ENCODE measurements at regions of chr15 and their contacts with region 1.

Region 1: GRCh38 chr15:62742409-62743171 is 300.0 kb upstream of the TPM1 start:
- DNase-seq: peak; percentile 46
- H3K4me3 Mint-ChIP-seq: no peak overlapping the region
- H3K27ac Mint-ChIP-seq: no peak overlapping the region
- H3K4me1 Mint-ChIP-seq: no peaks in the 10 kb centered on the region
- H3K27me3 Mint-ChIP-seq: peaks cover 1% of the 10 kb centered on the region

Region 2: GRCh38 chr15:62389885-62390790 is 352.5 kb before region 1 on chr15:
- CTCF ChIA-PET with region 1: interaction called, 7 read pairs
- POLR2A ChIA-PET with region 1: no interaction called
- intact Hi-C with region 1: loop called (anchors 2 kb)
- DNase-seq: peak; percentile 73
- H3K4me3 Mint-ChIP-seq: peak within 1 kb of the TSS; percentile 92
- H3K27ac Mint-ChIP-seq: peak within 1 kb of the TSS; percentile 72
- H3K4me1 Mint-ChIP-seq: peaks cover 14% of the 10 kb centered on the region
- H3K27me3 Mint-ChIP-seq: peaks cover 22% of the 10 kb centered on the region

Region 3: DNA sequence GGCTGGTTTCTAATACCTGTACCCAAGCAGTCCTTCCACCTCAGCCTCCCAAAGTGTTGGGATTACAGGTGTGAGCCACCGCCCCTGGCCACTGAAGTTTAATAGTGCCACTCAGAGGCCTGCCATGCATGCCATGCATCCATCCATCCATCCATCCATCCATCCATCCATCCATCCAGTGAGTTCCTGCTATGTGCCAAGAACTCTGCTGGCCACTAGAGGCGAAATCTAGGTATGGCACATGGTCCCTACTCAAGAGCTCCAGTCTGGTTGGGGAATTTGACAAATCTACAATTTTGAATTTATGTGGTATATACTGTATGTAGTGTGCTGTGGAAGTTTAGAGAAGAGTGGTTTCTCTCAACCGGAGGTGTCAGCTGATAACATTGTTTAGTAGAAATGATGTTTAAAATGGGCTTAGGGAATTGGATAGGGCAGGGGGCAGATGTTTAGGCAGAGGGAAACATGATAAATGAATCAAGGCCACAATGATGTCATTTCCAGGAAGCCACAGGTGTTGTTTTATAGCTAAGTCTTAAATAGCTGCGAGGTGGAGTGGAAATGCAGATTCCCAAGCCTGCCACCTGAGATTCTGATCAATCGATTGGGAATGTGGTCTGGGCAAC is 193.1 kb before region 1 on chr15:
- CTCF ChIA-PET with region 1: no interaction called
- POLR2A ChIA-PET with region 1: no interaction called
- intact Hi-C with region 1: no loop called
- DNase-seq: peak; percentile 10
- H3K4me3 Mint-ChIP-seq: no peak overlapping the region
- H3K27ac Mint-ChIP-seq: no peak overlapping the region
- H3K4me1 Mint-ChIP-seq: no peaks in the 10 kb centered on the region
- H3K27me3 Mint-ChIP-seq: peaks cover 11% of the 10 kb centered on the region

Region 4: DNA sequence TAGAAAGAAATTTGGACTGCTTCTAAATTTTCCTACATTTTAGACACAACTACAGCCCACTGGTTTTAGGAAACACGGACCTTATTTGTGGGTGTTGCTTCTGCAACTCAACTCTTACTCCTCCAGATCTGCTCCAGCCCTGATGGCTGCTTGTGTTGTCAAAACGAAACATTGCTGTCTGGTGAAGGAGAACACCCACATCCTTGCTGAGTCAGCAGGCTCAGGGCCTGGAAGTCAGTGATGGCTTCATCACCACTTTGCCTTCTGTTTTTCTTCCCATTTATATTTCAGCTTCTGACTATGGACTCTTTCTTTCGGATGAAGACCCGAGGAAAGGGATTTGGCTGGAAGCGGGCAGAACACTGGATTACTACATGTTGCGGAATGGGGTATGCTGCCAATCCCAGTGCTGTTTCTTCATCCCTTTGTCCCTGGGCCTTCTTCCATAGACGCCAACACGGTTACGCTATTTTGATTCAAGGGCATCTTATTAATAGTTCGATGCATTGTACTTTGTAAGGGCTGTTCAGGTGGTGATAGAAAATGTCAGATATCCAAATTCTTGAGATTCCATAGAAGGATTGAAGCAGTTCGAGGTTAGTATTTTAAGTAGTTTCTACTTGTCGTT is 92.7 kb before region 1 on chr15:
- CTCF ChIA-PET with region 1: no interaction called
- POLR2A ChIA-PET with region 1: no interaction called
- intact Hi-C with region 1: loop called (anchors 10 kb)
- DNase-seq: peak; percentile 52
- H3K4me3 Mint-ChIP-seq: no peak overlapping the region
- H3K27ac Mint-ChIP-seq: no peak overlapping the region
- H3K4me1 Mint-ChIP-seq: no peaks in the 10 kb centered on the region
- H3K27me3 Mint-ChIP-seq: peaks cover 1% of the 10 kb centered on the region

Region 5: GRCh38 chr15:62726461-62726860 is 16.1 kb before region 1 on chr15:
- CTCF ChIA-PET with region 1: interaction called, 13 read pairs
- POLR2A ChIA-PET with region 1: no interaction called
- intact Hi-C with region 1: no loop called
- DNase-seq: no peak
- H3K4me3 Mint-ChIP-seq: no peak overlapping the region
- H3K27ac Mint-ChIP-seq: no peak overlapping the region
- H3K4me1 Mint-ChIP-seq: no peaks in the 10 kb centered on the region
- H3K27me3 Mint-ChIP-seq: peaks cover 5% of the 10 kb centered on the region

Region 6: DNA sequence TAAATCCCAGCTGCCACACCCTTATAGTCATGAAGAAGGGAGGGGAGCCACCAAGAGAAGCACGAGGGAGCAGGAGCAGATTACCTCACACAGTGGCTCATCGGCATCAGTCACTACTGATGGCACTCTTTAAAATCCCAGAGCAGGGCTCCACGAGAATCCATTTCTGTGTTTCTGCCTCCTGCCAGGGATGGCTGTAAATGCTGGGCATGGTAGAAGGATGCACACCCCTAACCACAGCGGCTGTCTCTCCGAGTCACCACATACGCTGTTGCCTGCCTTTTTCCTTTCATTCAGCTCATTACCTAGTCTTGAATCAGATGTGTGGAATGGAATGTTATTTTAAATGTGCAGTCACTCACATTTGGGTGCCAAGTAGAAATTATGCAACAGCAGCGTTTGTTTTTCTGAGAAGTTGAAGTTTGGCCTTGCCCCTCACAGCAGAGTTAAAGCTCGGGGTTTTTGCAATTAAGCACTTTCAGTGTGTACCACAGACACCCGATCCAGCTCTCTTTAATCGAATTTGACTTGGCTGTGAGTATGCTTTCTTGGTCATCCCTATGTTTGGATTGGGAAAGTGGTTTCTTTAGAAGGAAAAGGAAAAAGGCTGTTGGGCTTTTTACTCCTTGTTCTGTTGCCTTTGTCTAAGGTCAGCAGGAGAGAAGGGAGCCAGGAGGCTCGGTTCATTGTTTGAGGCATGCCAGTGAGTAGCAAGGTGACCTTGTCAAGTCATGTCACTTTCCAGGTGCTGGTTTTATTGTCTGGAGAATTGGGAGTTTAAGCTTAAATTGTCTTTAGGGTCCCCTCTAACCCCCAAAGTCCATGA is 15.7 kb after region 1 on chr15:
- CTCF ChIA-PET with region 1: interaction called, 10 read pairs
- POLR2A ChIA-PET with region 1: no interaction called
- intact Hi-C with region 1: no loop called
- DNase-seq: no peak
- H3K4me3 Mint-ChIP-seq: no peak overlapping the region
- H3K27ac Mint-ChIP-seq: no peak overlapping the region
- H3K4me1 Mint-ChIP-seq: no peaks in the 10 kb centered on the region
- H3K27me3 Mint-ChIP-seq: no peaks in the 10 kb centered on the region

Region 7: DNA sequence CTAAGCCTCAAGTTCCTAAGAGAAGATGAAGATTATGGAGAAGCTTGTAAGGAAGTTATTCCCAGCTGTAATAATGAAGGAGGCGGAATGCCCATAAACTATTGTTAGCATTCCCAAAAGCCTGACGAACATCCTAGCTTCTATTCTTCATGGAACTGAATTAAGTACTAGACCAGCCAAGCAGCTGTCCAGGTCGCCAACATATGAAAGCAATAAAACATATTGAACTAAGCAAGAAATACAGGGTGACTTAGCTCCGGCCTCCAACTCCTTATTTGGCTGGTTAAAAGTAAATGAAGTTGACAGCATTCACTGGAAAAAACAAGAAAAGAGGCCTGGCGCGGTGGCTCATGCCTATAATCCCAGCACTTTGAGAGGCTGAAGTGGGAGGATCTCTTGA is 125.9 kb after region 1 on chr15:
- CTCF ChIA-PET with region 1: no interaction called
- POLR2A ChIA-PET with region 1: no interaction called
- intact Hi-C with region 1: no loop called
- DNase-seq: no peak
- H3K4me3 Mint-ChIP-seq: no peak overlapping the region
- H3K27ac Mint-ChIP-seq: no peak overlapping the region
- H3K4me1 Mint-ChIP-seq: no peaks in the 10 kb centered on the region
- H3K27me3 Mint-ChIP-seq: no peaks in the 10 kb centered on the region

Measured in activated CD4-positive, alpha-beta memory T cell treated with anti-CD3 and anti-CD28 coated beads for 36 hours (primary cell).